ENCODE measurements at regions of chr5 and their contacts with region 1.

Region 1: GRCh38 chr5:180291943-180292831 is at the start of gene MAPK9:
- DNase-seq: peak; percentile 64
- ATAC-seq: peak; percentile 93
- H3K4me3 ChIP-seq: peak within 1 kb of the TSS; percentile 94
- H3K27ac ChIP-seq: peak within 1 kb of the TSS; percentile 58; the same call in 1 of the 2 replicates
- H3K4me1 ChIP-seq: peaks cover 4% of the 10 kb centered on the region; the same call in 1 of the 2 replicates
- H3K27me3 ChIP-seq: no peaks in the 10 kb centered on the region
- CTCF ChIP-seq: no peak
- POLR2A ChIP-seq: no peak
- RAD21 ChIP-seq: no peak
- total RNA-seq, gene MAPK9: 22.9 and 27.8 TPM in 2 replicates

Region 2: GRCh38 chr5:180126726-180127681 is 165.2 kb before region 1 on chr5:
- CTCF ChIA-PET with region 1: no interaction called
- POLR2A ChIA-PET with region 1: no interaction called
- dilution Hi-C with region 1: no loop called
- in situ Hi-C with region 1: no loop called
- intact Hi-C with region 1: loop called (anchors 2 kb)
- DNase-seq: no peak
- ATAC-seq: peak; percentile 94
- H3K4me3 ChIP-seq: no peak overlapping the region
- H3K27ac ChIP-seq: no peak overlapping the region
- H3K4me1 ChIP-seq: no peaks in the 10 kb centered on the region; the same call in 1 of the 2 replicates
- H3K27me3 ChIP-seq: peaks cover 24% of the 10 kb centered on the region
- CTCF ChIP-seq: peak; percentile 73
- POLR2A ChIP-seq: no peak
- RAD21 ChIP-seq: peak; percentile 77

Region 3: GRCh38 chr5:180328296-180329137 is 36.3 kb after region 1 on chr5:
- CTCF ChIA-PET with region 1: interaction called, 9 read pairs
- POLR2A ChIA-PET with region 1: no interaction called
- dilution Hi-C with region 1: no loop called
- in situ Hi-C with region 1: no loop called
- intact Hi-C with region 1: loop called (anchors 2 kb)
- DNase-seq: peak; percentile 60
- ATAC-seq: no peak
- H3K4me3 ChIP-seq: no peak overlapping the region
- H3K27ac ChIP-seq: no peak overlapping the region
- H3K4me1 ChIP-seq: peaks cover 18% of the 10 kb centered on the region
- H3K27me3 ChIP-seq: no peaks in the 10 kb centered on the region
- CTCF ChIP-seq: peak; percentile 56
- POLR2A ChIP-seq: no peak
- RAD21 ChIP-seq: peak; percentile 51

Region 4: DNA sequence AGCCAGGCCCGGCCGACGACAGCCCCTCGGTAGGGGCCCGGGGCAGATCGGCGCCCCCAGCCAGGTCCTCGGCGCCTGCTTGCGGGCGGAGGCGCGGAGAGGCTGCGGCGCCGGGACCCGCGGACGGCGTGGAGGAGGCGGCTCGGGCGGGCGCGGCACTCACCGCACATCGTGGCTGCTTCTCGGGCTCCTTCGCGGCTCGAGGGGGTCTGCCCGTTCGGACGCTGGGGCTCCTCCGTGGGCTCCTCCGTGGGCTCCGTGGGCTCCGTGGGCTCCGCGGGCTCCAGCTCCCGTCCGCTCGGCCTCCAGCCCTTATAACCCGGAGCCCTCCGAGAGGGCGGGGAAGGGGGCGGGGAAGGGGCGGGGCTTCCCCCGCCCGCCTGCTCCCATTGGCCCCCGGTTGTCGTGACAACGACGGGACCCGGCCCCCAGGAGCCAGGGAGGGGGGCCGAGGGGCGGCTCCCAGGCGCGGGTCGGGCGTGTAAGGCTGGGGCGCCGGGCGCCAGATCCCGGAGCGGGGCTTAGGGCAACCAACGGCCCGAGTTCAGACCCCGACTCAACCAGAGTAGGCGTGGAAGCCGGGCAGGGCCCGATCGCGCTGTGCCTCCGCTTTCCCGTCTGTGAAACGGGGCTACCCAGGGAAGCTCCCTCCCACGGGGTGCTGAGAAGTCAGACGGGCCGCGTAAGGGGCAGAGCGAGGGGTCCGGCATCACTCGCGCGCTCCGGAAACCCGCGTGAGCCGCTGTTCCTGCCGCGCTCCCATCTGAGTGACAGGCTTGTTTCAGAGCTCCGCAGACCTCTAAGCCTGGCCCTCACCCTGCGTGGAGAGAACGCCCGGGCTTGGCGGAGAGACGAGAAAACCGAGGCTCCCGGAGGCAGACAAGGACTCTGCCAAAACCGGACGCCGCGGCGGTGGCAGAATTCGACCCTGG is 61.1 kb after region 1 on chr5 and contains the start of gene GFPT2:
- CTCF ChIA-PET with region 1: no interaction called
- POLR2A ChIA-PET with region 1: no interaction called
- dilution Hi-C with region 1: no loop called
- in situ Hi-C with region 1: no loop called
- intact Hi-C with region 1: loop called (anchors 2 kb)
- DNase-seq: peak; percentile 64
- ATAC-seq: peak; percentile 93
- H3K4me3 ChIP-seq: peak within 1 kb of the TSS; percentile 83
- H3K27ac ChIP-seq: no peak within 1 kb of the TSS; the same call in 1 of the 2 replicates
- H3K4me1 ChIP-seq: no peaks in the 10 kb centered on the region; the same call in 1 of the 2 replicates
- H3K27me3 ChIP-seq: peaks cover 13% of the 10 kb centered on the region; the same call in 1 of the 2 replicates
- CTCF ChIP-seq: no peak
- POLR2A ChIP-seq: peak; percentile 93
- RAD21 ChIP-seq: no peak
- total RNA-seq, gene GFPT2: 20.6 and 20.8 TPM in 2 replicates

Region 5: DNA sequence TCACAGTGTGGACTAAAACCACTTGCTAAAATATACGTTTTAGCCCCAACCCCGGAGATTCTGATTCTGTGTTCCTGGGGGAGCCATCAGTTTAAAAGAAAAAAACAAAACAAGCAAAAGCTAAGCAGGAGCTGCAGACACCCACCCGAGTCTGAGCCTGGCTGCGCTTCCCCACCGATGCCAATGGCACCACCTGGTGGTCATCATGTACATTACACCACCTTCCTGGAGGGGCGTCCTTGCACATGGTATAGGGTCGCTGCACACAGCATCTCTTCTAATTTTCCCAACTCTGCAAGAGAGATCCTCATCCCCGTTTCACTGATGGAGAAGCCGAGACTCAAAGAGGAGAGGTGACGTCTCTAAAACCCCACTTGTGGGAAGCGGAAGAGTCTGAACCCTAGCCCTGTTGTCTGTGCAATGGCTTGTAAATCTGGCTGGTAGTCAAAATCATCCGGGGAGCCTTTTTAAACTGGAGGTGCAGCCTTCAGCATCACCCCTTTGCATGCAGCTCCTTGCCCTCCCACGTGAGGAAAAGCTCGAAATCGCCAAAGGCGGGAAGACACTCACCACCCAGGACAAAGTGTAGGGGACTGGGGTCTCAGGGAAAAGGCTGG is 178.9 kb after region 1 on chr5:
- CTCF ChIA-PET with region 1: interaction called, 27 read pairs
- POLR2A ChIA-PET with region 1: no interaction called
- dilution Hi-C with region 1: no loop called
- in situ Hi-C with region 1: loop called (anchors 5 kb)
- intact Hi-C with region 1: loop called (anchors 1 kb)
- DNase-seq: peak; percentile 59
- ATAC-seq: peak; percentile 98
- H3K4me3 ChIP-seq: no peak overlapping the region
- H3K27ac ChIP-seq: no peak overlapping the region
- H3K4me1 ChIP-seq: no peaks in the 10 kb centered on the region
- H3K27me3 ChIP-seq: peaks cover 11% of the 10 kb centered on the region
- CTCF ChIP-seq: peak; percentile 89
- POLR2A ChIP-seq: no peak
- RAD21 ChIP-seq: peak; percentile 93

Region 6: GRCh38 chr5:180670586-180671359 is 378.6 kb after region 1 on chr5:
- CTCF ChIA-PET with region 1: no interaction called
- POLR2A ChIA-PET with region 1: no interaction called
- dilution Hi-C with region 1: no loop called
- in situ Hi-C with region 1: no loop called
- intact Hi-C with region 1: loop called (anchors 1 kb)
- DNase-seq: peak; percentile 37
- ATAC-seq: peak; percentile 72
- H3K4me3 ChIP-seq: no peak overlapping the region
- H3K27ac ChIP-seq: no peak overlapping the region
- H3K4me1 ChIP-seq: no peaks in the 10 kb centered on the region
- H3K27me3 ChIP-seq: peaks cover 14% of the 10 kb centered on the region
- CTCF ChIP-seq: peak; percentile 41
- POLR2A ChIP-seq: no peak
- RAD21 ChIP-seq: peak; percentile 30; the same call in 1 of the 2 replicates

Region 7: DNA sequence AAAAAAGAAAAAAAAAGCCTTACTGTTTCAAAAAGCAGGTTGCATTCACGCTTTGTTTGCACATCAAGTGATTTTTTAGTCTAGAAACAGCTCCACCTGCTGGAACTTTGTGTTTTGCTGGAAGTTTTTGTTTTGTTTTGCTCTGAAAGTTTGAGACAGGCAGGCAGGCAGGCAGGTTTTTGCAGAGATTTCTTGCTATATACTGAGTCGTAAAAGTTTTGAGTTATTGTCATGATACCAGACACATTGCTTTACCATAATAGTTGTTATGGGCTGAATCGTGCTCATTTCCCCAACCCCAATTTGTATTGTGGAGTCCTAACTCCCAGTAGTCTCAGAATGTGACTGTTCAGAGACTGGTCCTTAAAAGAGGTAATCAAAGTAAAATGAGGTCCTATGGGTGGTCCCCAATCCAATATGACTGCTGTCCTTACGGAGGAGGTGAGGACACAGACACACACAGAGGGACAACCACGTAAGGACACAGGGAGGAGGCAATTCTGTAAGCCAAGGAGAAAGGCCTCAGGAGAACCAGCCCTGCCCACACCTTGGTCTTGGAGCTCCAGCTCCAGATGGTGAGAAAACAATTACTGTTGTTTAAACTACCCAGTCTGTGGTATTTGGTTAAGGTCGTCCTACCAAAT is 426.7 kb after region 1 on chr5:
- CTCF ChIA-PET with region 1: no interaction called
- POLR2A ChIA-PET with region 1: no interaction called
- dilution Hi-C with region 1: no loop called
- in situ Hi-C with region 1: no loop called
- intact Hi-C with region 1: loop called (anchors 2 kb)
- DNase-seq: peak; percentile 31
- ATAC-seq: no peak
- H3K4me3 ChIP-seq: no peak overlapping the region
- H3K27ac ChIP-seq: no peak overlapping the region
- H3K4me1 ChIP-seq: no peaks in the 10 kb centered on the region
- H3K27me3 ChIP-seq: no peaks in the 10 kb centered on the region
- CTCF ChIP-seq: peak; percentile 56
- POLR2A ChIP-seq: no peak
- RAD21 ChIP-seq: peak; percentile 34

Measured in IMR-90 (cell line).